ENCODE measurements at regions of chr3 and their contacts with region 1.

Region 1: DNA sequence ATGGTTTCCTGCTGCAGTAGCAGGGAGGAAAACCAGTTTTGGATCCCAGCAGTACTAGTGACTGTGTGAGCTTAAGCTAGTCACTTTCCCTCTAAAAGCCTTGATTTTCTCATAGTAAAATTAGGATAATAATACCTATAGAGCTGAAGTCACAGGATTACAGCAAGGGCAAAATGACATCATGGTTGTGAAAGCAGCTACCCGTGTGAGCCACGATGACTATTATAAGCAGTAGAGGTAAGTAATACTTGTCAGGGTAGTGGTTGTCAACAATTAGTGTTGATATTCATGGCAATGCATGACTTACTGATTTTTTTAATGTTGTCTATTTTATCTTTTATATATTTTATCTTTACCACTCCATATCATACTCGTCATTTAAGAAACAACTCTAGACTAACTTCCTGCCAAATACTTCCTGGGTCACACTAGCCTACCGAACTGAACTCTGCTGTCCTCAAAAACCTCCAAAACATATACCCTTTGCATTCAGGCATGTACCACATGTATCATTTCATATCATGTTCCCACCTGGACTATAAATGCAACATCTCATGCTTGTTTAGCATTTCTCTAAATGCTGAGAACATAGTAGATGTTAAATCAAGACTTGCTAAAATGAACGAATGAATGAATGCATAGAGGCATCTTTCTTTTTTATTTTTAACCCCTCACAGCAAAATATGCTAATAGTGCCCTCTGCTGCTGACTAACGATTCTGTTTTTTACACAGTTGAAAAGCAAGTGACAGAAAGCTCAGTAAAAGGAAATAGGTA is 172.6 kb downstream of the P3H2 start:
- DNase-seq: no peak
- ATAC-seq: peak in 1 of 2 donors; percentile 59
- H3K4me3 ChIP-seq: no peak overlapping the region
- H3K27ac ChIP-seq: no peak overlapping the region
- H3K4me1 ChIP-seq: peaks cover 5 to 9% of the 10 kb centered on the region in 2 donors
- H3K27me3 ChIP-seq: no peaks in the 10 kb centered on the region
- CTCF ChIP-seq: peak in 4 of 5 experiments; percentile 47 to 67 (median 53)
- POLR2A ChIP-seq: no peak

Region 2: DNA sequence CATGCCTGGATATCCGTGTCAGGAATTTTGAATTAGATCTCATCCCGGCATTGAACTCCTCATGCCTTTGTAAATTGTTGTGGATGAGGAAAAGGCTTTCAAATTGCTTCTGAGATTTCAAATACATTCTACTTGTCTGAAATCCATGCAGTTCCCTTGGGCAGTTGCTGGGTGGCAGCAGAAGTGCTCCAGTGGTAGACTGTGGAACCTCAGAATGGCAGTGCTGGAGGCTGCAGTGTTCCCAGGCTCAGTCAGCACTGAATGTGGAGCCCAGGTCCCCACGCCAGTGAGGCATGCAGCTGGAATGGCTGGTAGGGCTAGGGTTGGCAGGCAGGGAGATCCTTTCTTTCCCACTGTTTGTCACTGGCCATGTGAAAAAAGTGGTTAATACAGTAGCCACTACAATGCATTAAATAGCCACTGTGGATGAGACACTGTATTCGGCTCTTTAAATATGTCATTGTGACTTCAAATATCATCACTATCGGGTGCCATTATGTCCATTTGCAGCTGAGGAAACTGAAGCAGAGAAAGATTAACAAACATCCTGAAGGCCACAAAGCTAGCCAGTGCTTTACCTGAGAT is 677.8 kb before region 1 on chr3:
- in situ Hi-C with region 1: loop called in 3 of 4 experiments (anchors 10 to 25 kb)
- intact Hi-C with region 1: loop called (anchors 1 kb)
- DNase-seq: peak; percentile 34 to 70
- ATAC-seq: peak; percentile 90 to 97
- H3K4me3 ChIP-seq: no peak overlapping the region
- H3K27ac ChIP-seq: no peak overlapping the region
- H3K4me1 ChIP-seq: peaks cover 10 to 11% of the 10 kb centered on the region in 2 donors
- H3K27me3 ChIP-seq: no peaks in the 10 kb centered on the region
- CTCF ChIP-seq: peak; percentile 49 to 70 (median 59)
- POLR2A ChIP-seq: no peak

Region 3: DNA sequence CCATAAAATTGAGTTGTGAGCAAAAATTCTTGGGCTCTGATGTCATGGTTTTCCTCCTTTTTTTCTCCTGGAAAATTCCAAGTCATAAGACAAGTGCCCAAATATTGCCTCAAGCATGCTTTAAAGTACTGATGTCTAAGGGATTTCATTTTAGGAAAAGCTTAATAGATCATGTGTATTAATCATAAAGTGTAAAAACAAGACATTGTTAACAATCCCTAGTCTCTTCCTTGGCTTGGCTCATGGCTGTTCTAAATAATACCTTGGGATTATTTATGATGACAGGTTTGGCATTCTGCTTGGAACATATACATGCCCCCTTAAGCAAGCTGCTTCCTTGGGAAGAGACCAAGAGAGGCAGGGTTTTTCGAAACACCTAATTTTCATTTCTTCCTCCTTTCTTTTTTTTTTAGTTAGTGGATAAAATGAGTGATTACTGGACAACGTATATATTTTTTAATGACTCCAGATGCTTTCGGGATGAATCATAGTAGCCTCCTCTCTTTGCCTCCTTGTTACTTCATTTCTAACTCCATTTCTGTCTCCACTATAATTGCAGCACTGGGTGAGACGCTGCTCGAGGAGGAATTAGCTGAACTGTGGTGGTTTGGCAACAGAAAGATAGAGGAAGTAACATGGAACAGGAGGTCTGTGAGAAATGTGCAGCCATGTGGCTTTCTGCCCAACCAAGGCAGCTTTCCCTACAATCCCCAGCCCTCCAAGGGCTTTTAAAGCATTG is 671.5 kb before region 1 on chr3:
- in situ Hi-C with region 1: loop called in 3 of 4 experiments (anchors 10 to 25 kb)
- intact Hi-C with region 1: no loop called
- DNase-seq: no peak
- ATAC-seq: no peak
- H3K4me3 ChIP-seq: no peak overlapping the region
- H3K27ac ChIP-seq: no peak overlapping the region
- H3K4me1 ChIP-seq: no peaks in the 10 kb centered on the region
- H3K27me3 ChIP-seq: no peaks in the 10 kb centered on the region
- CTCF ChIP-seq: no peak
- POLR2A ChIP-seq: no peak

Region 4: DNA sequence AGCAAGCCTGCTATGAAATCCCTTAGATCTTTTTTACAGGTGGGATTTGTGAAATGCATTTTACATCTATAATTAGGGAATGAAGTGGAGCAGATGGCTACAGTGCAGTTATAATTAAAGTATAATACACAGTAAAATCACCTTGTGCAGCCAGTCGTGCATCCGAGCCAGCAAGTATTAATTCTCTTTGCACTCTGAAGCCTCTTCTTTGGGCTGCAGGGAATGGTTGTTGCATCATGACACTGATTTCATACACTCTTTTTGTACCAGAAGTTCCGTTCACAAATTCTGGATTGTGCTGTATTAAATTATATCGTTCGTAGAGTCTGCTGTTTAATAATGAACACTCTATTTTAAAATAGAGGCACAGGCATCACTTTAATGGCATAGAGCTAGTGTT is 345.7 kb before region 1 on chr3:
- in situ Hi-C with region 1: no loop called
- intact Hi-C with region 1: loop called (anchors 10 kb)
- DNase-seq: no peak
- ATAC-seq: no peak
- H3K4me3 ChIP-seq: no peak overlapping the region
- H3K27ac ChIP-seq: no peak overlapping the region
- H3K4me1 ChIP-seq: no peaks in the 10 kb centered on the region
- H3K27me3 ChIP-seq: no peaks in the 10 kb centered on the region
- CTCF ChIP-seq: no peak
- POLR2A ChIP-seq: no peak

Region 5: DNA sequence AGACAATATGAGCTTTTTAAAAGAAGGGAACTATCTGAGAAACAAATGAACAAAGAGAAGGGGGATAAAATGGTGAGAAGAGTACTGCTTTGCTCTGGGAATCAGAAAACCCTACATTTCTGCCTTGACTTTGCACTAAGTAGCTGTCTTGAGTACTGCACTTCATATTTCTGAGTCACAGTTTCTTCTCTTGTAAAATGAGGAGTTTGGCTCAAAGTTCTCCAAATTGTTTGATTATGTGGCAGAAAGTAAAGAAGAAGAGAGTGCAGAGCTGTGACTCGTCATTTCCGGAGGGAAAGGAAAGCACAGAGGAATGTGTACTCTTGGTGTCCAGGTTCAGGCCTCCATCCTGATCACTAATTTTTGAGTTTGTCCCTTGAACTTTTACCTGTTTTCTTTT is 262.3 kb before region 1 on chr3:
- in situ Hi-C with region 1: no loop called
- intact Hi-C with region 1: loop called (anchors 5 kb)
- DNase-seq: no peak
- ATAC-seq: no peak
- H3K4me3 ChIP-seq: no peak overlapping the region
- H3K27ac ChIP-seq: no peak overlapping the region
- H3K4me1 ChIP-seq: peaks cover 14 to 36% of the 10 kb centered on the region in 2 donors
- H3K27me3 ChIP-seq: no peaks in the 10 kb centered on the region
- CTCF ChIP-seq: no peak
- POLR2A ChIP-seq: no peak

Measured in gastrocnemius medialis (tissue), 4 donors.